ENCODE measurements at regions of chr1 and their contacts with region 1.

Region 1: GRCh38 chr1:209692745-209693504 is 11.7 kb upstream of the HSD11B1 start:
- DNase-seq: peak; percentile 79 to 91 (median 82)
- H3K4me3 ChIP-seq: no peak overlapping the region
- H3K27ac ChIP-seq: no peak overlapping the region
- H3K4me1 ChIP-seq: peaks cover 8% of the 10 kb centered on the region
- H3K27me3 ChIP-seq: no peaks in the 10 kb centered on the region
- CTCF ChIP-seq: peak; percentile 82 to 86 (median 84)
- EP300 ChIP-seq: no peak
- POLR2A ChIP-seq: no peak

Region 2: DNA sequence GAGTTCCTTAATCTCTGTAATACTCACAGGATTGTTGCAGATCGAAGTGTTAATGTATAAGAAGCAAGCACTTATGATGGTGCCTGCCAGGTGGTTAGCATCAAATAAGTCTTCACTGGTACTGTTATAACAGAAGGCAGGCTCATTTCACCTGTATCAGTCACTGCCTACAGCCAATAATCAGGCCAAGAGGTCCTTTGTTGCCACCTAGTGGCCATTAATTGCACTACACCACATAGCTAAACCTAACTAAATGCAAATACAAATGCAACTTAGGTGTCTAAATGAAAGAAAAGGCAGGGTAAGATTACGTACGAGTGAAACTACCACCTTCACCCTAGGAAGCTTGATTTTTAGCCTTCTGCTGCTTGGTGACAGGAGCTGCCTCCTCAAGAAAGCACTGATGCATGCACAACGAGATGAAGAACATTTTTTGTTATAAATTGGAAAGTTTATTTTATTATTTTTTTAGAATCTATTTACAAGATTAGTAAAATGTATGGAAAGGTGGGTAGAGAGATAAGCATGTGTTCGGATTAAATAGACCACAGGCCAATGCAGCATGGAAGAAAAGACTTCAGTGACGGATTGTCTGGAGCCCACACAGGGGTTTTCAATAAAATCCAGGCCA is 444.2 kb before region 1 on chr1:
- intact Hi-C with region 1: no loop called
- DNase-seq: peak in 1 of 5 donors; percentile 33
- H3K4me3 ChIP-seq: no peak overlapping the region
- H3K27ac ChIP-seq: no peak overlapping the region
- H3K4me1 ChIP-seq: no peaks in the 10 kb centered on the region
- H3K27me3 ChIP-seq: no peaks in the 10 kb centered on the region
- CTCF ChIP-seq: peak; percentile 35 to 60 (median 36)
- EP300 ChIP-seq: no peak
- POLR2A ChIP-seq: no peak

Region 3: GRCh38 chr1:209576798-209577197 is 116.1 kb before region 1 on chr1:
- intact Hi-C with region 1: loop called in 3 of 4 experiments (anchors 2 to 5 kb)
- DNase-seq: peak; percentile 75 to 88 (median 88)
- H3K4me3 ChIP-seq: no peak overlapping the region
- H3K27ac ChIP-seq: no peak overlapping the region
- H3K4me1 ChIP-seq: no peaks in the 10 kb centered on the region
- H3K27me3 ChIP-seq: no peaks in the 10 kb centered on the region
- CTCF ChIP-seq: peak; percentile 84 to 86 (median 85)
- EP300 ChIP-seq: no peak
- POLR2A ChIP-seq: no peak

Region 4: DNA sequence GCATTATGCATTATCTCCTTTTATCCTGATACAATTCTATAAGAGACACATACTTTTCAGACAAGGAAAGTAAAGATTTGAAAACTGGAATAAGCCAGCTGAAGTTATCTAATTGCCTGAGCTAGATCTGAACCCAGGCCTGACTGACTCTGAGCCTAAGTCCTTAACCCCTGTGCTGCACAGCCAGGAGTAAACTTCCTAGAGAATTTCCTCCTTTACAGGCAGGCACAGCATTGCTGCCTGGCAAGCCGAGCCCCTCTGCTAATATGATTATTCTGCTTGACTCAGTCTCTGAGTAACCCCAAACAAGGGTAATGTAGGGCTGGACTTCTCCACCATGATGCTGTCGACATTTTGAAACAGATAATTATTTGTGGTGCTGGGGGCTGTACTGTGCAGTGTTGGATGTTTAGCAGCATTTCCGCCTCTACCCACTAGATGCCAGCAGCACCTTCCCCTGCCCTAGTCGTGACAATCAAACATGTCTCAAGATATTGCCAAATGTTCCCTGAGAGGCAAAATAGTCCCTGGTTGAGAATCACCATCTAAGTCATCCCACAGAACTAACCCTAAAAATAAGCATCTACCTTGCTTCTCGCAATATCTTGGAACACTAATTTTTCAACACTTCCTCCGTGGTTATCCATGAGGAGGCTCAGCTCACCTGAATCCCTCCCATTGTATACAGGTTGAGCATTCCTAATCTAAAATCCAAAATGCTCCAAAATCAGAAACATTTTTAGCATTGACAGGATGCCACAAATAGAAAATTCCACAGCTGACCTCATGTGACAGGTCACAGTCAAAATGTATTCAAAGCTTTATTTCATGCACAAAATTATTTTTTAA is 90.9 kb before region 1 on chr1:
- intact Hi-C with region 1: loop called in 1 of 4 experiments (anchors 5 kb)
- DNase-seq: peak in 4 of 5 donors; percentile 44 to 53 (median 50)
- H3K4me3 ChIP-seq: no peak overlapping the region
- H3K27ac ChIP-seq: no peak overlapping the region
- H3K4me1 ChIP-seq: no peaks in the 10 kb centered on the region
- H3K27me3 ChIP-seq: no peaks in the 10 kb centered on the region
- CTCF ChIP-seq: peak; percentile 55 to 68 (median 62)
- EP300 ChIP-seq: no peak
- POLR2A ChIP-seq: no peak

Region 5: DNA sequence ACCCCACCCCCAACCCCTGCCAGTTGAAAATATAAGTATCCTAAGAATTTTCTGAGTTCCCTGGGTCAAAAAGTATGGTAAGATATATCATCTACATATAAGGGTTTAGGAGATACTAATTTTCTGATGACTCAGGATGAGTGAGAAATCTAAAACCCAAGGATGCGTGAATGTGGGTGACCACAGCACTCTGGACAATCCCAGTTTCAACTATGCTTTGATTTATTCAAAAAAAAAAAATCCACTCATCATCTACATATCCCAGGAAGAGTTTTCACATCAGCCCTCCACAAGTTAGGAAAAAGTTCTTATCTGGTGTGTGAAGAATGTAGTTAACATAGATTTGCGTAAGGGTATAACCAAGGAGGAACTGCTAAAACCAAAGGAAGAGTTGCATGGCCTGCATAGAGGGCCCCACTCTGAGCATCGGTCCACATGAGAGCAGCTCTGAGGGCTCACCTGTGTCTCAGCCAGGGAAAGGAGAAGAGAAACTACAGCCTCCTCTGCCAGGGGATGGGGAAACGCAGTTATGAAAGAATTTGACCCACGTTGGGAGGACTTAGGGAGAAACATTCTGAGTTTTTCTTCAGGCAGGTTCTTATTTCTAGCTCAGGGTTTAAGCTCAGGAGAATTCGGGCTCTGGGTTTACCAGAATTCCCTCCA is 59.5 kb before region 1 on chr1:
- intact Hi-C with region 1: loop called in 2 of 4 experiments (anchors 10 kb)
- DNase-seq: no peak
- H3K4me3 ChIP-seq: no peak overlapping the region
- H3K27ac ChIP-seq: no peak overlapping the region
- H3K4me1 ChIP-seq: no peaks in the 10 kb centered on the region
- H3K27me3 ChIP-seq: no peaks in the 10 kb centered on the region
- CTCF ChIP-seq: no peak
- EP300 ChIP-seq: no peak
- POLR2A ChIP-seq: no peak

Region 6: DNA sequence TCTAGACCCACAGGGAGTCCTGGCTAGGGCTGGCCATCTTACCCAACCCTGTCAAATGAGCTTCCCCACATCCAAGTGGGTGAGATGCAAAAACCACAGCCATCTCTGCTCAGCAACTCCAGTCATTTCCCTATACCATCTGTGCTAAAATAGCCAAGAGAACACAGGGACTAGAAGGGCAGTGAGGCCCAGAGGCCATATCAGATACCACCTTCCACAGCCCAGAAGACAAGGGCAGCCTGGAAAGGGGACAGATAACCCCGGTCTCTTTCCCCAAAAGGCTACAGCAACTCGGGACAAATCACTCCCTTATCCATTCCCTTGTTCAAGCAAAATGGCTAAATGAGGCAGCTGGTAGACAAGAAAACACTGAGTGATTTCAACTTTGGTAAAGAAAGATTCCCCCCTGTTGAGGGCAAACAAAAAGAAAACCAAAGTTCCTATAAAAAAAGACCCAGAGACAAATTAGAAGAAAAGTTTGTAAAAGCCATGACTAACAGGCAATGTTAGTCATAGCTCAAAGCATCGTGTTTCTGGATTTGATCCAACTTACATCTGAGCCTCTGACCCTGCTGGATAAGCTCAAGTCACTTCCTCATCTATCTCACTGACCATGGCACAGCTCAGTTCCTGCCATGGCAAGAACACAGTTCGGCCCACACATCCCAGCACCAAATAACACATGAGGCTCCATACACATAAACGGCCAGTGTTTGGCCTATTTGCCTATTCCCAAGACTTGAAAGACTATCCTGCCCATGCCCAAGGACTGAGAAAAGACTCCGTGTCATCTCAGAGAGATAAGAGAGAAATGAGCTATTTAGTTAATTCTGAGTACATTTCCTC is 43.8 kb before region 1 on chr1:
- intact Hi-C with region 1: loop called in 2 of 4 experiments (anchors 5 kb)
- DNase-seq: no peak
- H3K4me3 ChIP-seq: no peak overlapping the region
- H3K27ac ChIP-seq: peak overlapping the region in 1 of 2 donors; percentile 22
- H3K4me1 ChIP-seq: peaks cover 33% of the 10 kb centered on the region
- H3K27me3 ChIP-seq: no peaks in the 10 kb centered on the region
- CTCF ChIP-seq: no peak
- EP300 ChIP-seq: no peak
- POLR2A ChIP-seq: no peak

Region 7: DNA sequence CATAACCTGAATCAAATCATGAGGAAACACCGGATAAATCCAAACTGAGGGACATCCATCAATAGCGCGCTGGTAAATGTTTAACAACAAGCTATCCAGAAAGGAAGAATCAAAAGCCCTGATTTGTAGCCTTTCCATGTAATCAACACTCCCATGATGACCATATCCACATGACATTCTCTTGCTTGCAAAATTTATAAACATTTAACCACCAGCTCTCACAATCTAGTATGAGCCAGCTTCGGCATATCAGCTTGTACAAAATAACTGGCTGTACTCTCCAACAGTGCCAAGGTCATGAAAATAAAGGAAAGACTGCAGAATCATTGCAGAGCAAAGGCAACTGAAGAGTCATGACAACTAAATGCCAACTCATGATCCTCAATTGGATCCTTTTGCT is 27.4 kb after region 1 on chr1:
- intact Hi-C with region 1: no loop called
- DNase-seq: peak in 1 of 5 donors; percentile 41
- H3K4me3 ChIP-seq: no peak overlapping the region
- H3K27ac ChIP-seq: peak overlapping the region in 1 of 2 donors; percentile 69
- H3K4me1 ChIP-seq: peaks cover 16% of the 10 kb centered on the region
- H3K27me3 ChIP-seq: no peaks in the 10 kb centered on the region
- CTCF ChIP-seq: no peak
- EP300 ChIP-seq: no peak
- POLR2A ChIP-seq: no peak

Region 8: GRCh38 chr1:209787551-209787950 is 94.6 kb after region 1 on chr1:
- intact Hi-C with region 1: loop called in 1 of 4 experiments (anchors 2 kb)
- DNase-seq: peak in 2 of 5 donors; percentile 34 to 49
- H3K4me3 ChIP-seq: no peak overlapping the region
- H3K27ac ChIP-seq: peak overlapping the region in 1 of 2 donors; percentile 0
- H3K4me1 ChIP-seq: peaks cover 5% of the 10 kb centered on the region
- H3K27me3 ChIP-seq: no peaks in the 10 kb centered on the region
- CTCF ChIP-seq: no peak
- EP300 ChIP-seq: no peak
- POLR2A ChIP-seq: no peak